Activated naive CD4-positive, alpha-beta T cell treated with anti-CD3 and anti-CD28 coated beads for 36 hours (primary cell): ENCODE measurements at regions of chr20 and their contacts with region 1.

Region 1: GRCh38 chr20:17504898-17505635 is 26.1 kb downstream of the BFSP1 start:
- DNase-seq: no peak
- H3K4me3 Mint-ChIP-seq: peak overlapping the region; percentile 73
- H3K27ac Mint-ChIP-seq: peak overlapping the region; percentile 18
- H3K4me1 Mint-ChIP-seq: peaks cover 19% of the 10 kb centered on the region
- H3K27me3 Mint-ChIP-seq: no peaks in the 10 kb centered on the region

Region 2: GRCh38 chr20:17236766-17237165 is 268.3 kb before region 1 on chr20:
- CTCF ChIA-PET with region 1: no interaction called
- intact Hi-C with region 1: no loop called
- DNase-seq: no peak
- H3K4me3 Mint-ChIP-seq: no peak overlapping the region
- H3K27ac Mint-ChIP-seq: no peak overlapping the region
- H3K4me1 Mint-ChIP-seq: no peaks in the 10 kb centered on the region
- H3K27me3 Mint-ChIP-seq: no peaks in the 10 kb centered on the region

Region 3: GRCh38 chr20:17530716-17531664 is 25.9 kb after region 1 on chr20 and contains the start of gene BFSP1:
- CTCF ChIA-PET with region 1: interaction called, 10 read pairs
- intact Hi-C with region 1: loop called (anchors 1 kb)
- DNase-seq: peak; percentile 69
- H3K4me3 Mint-ChIP-seq: peak within 1 kb of the TSS; percentile 85
- H3K27ac Mint-ChIP-seq: no peak within 1 kb of the TSS
- H3K4me1 Mint-ChIP-seq: peaks cover 9% of the 10 kb centered on the region
- H3K27me3 Mint-ChIP-seq: peaks cover 17% of the 10 kb centered on the region
- total RNA-seq, gene BFSP1: 0.19 TPM in 1 of 2 experiments, not detected in the other

Region 4: DNA sequence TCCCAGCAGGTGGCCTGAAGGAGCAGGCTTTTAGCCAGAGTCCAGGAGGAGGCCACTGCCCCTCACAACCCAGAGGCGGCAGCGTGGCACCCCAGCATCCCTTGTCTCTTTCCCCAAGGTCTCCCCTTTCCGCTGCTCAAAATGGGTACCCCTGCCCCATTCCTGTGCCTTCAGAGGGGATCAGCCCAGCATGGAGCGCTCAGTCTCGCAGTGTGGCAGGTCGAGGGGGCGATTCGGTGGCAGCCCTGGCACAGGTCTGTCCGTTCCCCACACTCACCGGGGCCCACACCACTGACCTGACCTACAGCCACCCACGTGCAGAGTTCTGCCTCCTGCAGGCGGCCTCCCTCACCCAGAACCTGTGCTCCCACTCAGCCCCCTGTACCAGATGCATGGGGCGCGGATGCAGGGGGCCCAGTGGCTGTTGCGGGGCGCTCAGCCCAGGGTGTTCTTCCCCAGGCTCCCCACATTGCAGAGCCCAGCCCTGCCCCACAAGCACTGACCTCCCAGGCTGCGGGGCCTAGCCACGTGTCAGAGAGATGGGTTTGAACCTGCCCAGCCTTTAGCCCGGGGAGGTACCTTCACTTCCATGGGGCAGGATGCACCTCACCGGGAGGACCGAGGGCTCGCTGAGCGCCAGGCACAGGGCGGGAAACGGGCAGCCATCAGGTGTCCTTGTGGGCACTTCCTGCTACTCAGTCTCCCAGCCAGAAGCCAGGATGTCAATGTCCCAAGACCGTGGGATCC is 106.6 kb after region 1 on chr20:
- CTCF ChIA-PET with region 1: interaction called, 13 read pairs
- intact Hi-C with region 1: no loop called
- DNase-seq: no peak
- H3K4me3 Mint-ChIP-seq: peak overlapping the region; percentile 38
- H3K27ac Mint-ChIP-seq: peak overlapping the region; percentile 82
- H3K4me1 Mint-ChIP-seq: peaks cover 34% of the 10 kb centered on the region
- H3K27me3 Mint-ChIP-seq: no peaks in the 10 kb centered on the region

Region 5: DNA sequence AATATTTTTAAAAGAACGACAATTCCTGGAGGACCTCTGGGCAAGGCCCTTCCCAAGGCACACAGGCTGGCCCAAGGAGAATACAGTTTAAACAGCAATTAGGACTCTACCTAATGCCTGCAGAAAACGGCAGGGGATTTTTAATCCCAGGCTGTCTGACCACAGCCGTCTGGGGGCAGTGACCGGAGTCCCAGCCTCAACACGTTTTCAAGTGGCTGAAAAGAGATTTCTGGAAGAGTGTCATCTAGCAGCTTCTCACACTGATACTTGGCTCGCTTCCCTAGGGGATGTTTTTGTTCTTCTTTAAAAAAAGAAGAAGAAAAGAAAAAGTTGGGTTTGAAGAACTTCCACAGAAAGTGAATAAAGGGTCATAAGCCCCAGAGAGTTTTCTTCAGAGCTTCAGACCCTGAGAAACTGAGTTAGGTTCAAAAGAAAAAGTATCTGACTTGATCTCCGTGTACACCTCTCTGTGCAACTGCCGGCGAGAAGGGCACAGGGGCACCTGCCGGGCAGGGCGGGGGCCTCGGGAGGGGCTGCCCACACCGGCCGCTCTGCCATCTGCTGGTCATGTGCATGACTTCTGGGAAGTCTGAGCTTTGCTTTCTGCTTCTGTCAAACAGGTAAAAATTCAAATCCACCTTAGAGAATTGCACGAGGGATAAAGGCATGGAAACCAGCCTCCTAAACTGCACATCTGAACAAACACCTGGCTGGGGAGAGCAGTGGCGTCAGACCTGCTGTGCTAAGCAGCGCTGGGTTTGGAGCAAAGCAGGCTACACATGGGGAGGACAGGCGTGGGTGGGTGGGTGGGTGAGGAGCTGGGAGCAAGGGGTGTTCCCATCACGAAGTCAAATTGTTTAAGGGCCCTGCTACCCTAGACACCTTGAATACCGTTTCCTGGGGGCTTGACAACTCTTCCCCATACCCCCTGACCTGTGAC is 144.0 kb after region 1 on chr20:
- CTCF ChIA-PET with region 1: interaction called, 6 read pairs
- intact Hi-C with region 1: loop called (anchors 1 kb)
- DNase-seq: peak; percentile 47
- H3K4me3 Mint-ChIP-seq: no peak overlapping the region
- H3K27ac Mint-ChIP-seq: no peak overlapping the region
- H3K4me1 Mint-ChIP-seq: peaks cover 6% of the 10 kb centered on the region
- H3K27me3 Mint-ChIP-seq: no peaks in the 10 kb centered on the region

Region 6: DNA sequence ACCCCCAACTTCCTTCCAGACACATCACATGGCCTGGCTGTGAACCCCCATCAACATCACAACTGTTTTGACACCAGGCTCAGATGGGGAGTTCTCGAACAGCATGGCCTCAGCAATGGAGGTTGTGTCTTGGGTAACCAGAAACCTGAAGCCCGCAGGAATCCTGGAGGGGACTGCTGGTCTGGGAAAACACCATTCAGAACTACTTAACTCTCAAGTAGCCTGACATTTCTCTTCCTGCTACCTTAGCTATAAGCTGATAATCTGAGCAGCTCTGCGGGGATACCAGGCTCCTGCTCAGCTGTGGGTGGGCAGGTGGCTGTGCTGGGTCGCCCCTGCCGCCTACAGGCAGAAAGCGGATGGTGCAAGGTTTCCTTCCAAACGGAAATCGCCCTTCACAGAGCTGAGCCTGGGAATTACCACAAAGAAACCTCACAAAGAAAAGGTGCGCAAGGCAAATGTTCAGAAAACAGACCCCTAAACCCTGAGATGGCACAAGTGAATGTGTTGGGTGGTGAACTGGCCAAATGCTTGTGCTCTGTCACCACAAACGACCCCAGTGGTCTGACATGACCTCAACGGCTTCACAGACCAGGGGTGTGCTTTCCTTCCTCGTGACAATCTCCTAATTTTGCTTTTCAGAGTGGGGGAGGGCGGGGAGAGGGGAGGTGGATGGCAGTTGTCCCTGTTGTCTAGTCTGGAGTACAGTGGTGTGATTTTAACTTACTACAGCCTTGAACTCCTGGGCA is 434.0 kb after region 1 on chr20:
- CTCF ChIA-PET with region 1: interaction called, 8 read pairs
- intact Hi-C with region 1: loop called (anchors 1 kb)
- DNase-seq: peak; percentile 69
- H3K4me3 Mint-ChIP-seq: no peak overlapping the region
- H3K27ac Mint-ChIP-seq: no peak overlapping the region
- H3K4me1 Mint-ChIP-seq: peaks cover 12% of the 10 kb centered on the region
- H3K27me3 Mint-ChIP-seq: no peaks in the 10 kb centered on the region

Region 7: DNA sequence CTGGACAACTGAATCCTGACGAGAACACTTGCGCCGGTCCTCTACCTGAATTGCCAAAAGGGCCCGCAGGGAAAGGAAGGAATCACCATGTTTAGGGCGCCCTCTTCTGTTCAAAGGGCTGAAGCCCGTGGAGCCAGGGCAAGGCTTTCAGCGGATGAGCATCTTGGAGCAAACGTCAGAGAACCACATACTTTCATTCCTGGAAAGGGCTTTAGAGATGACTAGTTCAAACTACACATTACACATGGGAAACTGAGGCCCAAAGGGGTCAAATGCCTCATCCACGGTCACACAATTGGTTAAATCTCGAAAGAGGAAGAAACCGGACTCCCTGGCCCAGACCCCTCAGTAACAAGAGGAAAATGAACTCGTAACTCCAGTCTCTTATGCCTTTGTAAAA is 771.8 kb after region 1 on chr20:
- CTCF ChIA-PET with region 1: interaction called, 3 read pairs
- intact Hi-C with region 1: loop called (anchors 1 kb)
- DNase-seq: peak; percentile 80
- H3K4me3 Mint-ChIP-seq: no peak overlapping the region
- H3K27ac Mint-ChIP-seq: no peak overlapping the region
- H3K4me1 Mint-ChIP-seq: no peaks in the 10 kb centered on the region
- H3K27me3 Mint-ChIP-seq: peaks cover 37% of the 10 kb centered on the region